ENCODE measurements at regions of chr10 and their contacts with region 1.

Region 1: GRCh38 chr10:58998924-58999713 is 177.3 kb upstream of the PHYHIPL start:
- DNase-seq: no peak
- CTCF ChIP-seq: no peak

Region 2: DNA sequence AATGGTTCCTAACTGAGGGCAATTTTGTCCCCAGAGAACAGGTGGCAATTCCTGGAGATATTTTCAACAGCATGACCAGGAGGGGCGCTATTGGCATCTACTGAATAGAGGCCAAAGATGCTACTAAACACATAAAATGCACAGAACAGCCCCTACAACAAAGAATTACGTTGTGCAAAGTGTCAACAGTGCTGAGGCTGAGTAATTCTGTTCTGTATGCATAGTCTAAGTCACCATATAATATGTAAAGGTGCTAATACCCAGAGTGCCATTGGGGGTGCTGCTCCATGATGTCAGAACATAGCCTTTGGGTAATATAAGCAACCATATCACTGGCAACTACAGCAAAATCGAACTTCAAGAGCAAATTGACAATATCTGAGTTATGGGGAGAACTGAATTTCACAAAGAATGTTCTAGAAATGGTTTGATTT is 36.0 kb before region 1 on chr10:
- CTCF ChIA-PET with region 1: no interaction called
- POLR2A ChIA-PET with region 1: no interaction called
- DNase-seq: no peak
- CTCF ChIP-seq: peak; percentile 4

Region 3: DNA sequence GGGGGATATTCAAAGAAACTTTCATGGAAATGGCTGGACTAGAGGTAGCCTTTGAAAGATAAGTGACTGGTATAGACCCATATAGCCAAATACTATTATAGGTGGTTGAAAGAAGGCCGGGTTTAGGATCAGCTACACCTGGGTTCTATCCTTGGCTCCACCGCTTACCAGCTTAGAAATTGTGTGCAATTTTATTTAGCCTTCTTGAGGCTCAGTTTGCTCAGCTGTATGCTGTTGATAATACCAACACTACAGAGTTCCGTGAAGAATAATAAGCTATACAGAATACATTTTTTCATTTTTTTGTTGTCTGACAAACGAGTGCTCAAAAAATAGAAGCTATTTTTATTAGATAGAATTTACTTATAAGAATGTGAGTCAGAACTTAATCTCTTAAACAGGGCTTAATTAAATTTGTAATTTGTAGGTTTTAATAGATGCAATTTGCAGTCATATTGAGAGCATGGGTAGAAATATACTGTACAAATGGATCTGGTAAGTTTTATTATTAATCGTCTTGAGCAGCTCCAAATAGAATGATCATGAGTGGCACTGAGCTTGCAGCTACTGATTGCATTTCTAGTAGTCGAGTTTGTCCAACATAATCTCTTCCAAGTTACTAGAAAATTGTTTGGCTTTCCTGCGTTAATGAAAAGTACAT is 13.0 kb after region 1 on chr10:
- CTCF ChIA-PET with region 1: interaction called, 11 read pairs
- POLR2A ChIA-PET with region 1: no interaction called
- DNase-seq: no peak
- CTCF ChIP-seq: no peak

Region 4: GRCh38 chr10:59047957-59048618 is 49.0 kb after region 1 on chr10:
- CTCF ChIA-PET with region 1: interaction called, 3 read pairs
- POLR2A ChIA-PET with region 1: interaction called, 10 read pairs
- DNase-seq: peak; percentile 10
- CTCF ChIP-seq: no peak

Measured in GM10248 (cell line).